ENCODE measurements at regions of chr11 and their contacts with region 1.

Region 1: GRCh38 chr11:86047275-86047991 is 21.5 kb downstream of the PICALM start:
- DNase-seq: no peak
- H3K4me3 Mint-ChIP-seq: peak overlapping the region; percentile 69
- H3K27ac Mint-ChIP-seq: peak overlapping the region; percentile 91
- H3K4me1 Mint-ChIP-seq: peaks cover 88% of the 10 kb centered on the region
- H3K27me3 Mint-ChIP-seq: no peaks in the 10 kb centered on the region

Region 2: GRCh38 chr11:85988780-85989179 is 58.7 kb before region 1 on chr11:
- intact Hi-C with region 1: no loop called
- DNase-seq: no peak
- H3K4me3 Mint-ChIP-seq: no peak overlapping the region
- H3K27ac Mint-ChIP-seq: peak overlapping the region; percentile 48
- H3K4me1 Mint-ChIP-seq: peaks cover 37% of the 10 kb centered on the region
- H3K27me3 Mint-ChIP-seq: no peaks in the 10 kb centered on the region

Region 3: DNA sequence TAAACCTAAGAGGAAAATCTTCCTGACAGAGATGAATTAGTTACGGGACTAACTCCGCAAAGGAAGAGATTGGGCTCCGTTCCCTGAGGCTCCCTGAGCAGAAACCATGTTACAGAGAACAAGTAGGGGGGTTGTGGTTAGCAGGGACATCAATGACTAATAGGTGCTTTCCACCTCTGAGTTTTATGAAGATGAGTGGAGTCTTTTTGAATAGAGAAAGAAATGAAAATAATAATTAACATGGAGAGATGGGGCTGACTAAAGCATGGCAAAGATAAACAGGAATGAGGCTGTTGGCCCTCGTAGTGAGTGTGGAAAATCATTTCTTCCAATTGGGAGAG is 68.9 kb after region 1 on chr11:
- intact Hi-C with region 1: loop called (anchors 5 kb)
- DNase-seq: no peak
- H3K4me3 Mint-ChIP-seq: peak overlapping the region; percentile 9
- H3K27ac Mint-ChIP-seq: peak overlapping the region; percentile 70
- H3K4me1 Mint-ChIP-seq: peaks cover 30% of the 10 kb centered on the region
- H3K27me3 Mint-ChIP-seq: no peaks in the 10 kb centered on the region

Region 4: DNA sequence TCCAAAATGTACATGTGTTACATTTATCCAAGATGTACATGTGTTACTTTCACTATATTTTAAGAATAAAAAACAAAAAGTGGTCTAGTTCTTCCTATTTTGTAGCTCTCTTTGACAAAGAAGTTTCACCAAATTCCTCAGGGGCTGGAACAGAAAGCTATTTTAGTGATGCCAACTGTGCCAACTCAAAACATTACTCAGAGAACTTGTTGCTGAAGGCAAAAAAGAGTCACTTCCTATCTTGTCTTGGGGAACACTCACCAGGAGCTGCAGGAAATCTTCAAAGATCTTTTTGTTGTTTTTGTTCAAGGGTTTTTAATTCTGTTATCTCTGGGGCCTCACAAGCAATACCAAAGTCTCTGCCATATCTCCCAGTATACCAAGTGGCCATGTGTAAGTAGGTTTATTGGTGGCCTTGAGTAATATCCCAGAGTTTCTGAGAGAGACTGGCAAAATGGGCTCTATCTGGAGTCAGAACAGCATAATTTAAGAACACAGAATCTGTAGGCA is 183.5 kb after region 1 on chr11:
- intact Hi-C with region 1: loop called (anchors 1 kb)
- DNase-seq: no peak
- H3K4me3 Mint-ChIP-seq: no peak overlapping the region
- H3K27ac Mint-ChIP-seq: peak overlapping the region; percentile 47
- H3K4me1 Mint-ChIP-seq: peaks cover 68% of the 10 kb centered on the region
- H3K27me3 Mint-ChIP-seq: no peaks in the 10 kb centered on the region

Region 5: DNA sequence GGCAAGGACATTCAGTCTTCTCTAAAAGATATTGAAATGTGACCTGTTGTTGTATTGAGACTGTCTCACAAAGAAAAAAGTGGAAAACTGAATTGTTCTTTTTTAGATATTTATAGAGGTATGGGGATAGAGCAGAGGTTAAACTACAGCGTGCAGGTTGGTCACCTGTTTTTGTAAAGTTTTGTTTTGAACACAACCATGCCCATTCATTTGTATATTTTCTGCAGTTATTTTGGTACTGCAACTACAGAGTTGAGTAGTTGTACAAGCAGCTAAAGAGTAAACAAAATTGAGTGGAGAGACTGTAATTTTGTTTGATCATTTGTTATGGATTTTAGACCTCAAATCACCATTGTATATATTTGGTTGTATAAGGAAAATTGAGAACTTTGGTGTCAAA is 208.5 kb after region 1 on chr11:
- intact Hi-C with region 1: loop called (anchors 1 kb)
- DNase-seq: no peak
- H3K4me3 Mint-ChIP-seq: peak overlapping the region; percentile 15
- H3K27ac Mint-ChIP-seq: peak overlapping the region; percentile 75
- H3K4me1 Mint-ChIP-seq: peaks cover 50% of the 10 kb centered on the region
- H3K27me3 Mint-ChIP-seq: no peaks in the 10 kb centered on the region

Region 6: GRCh38 chr11:87463486-87464102 is 1416.2 kb after region 1 on chr11:
- intact Hi-C with region 1: no loop called
- DNase-seq: no peak
- H3K4me3 Mint-ChIP-seq: no peak overlapping the region
- H3K27ac Mint-ChIP-seq: no peak overlapping the region
- H3K4me1 Mint-ChIP-seq: no peaks in the 10 kb centered on the region
- H3K27me3 Mint-ChIP-seq: no peaks in the 10 kb centered on the region

Measured in activated T-helper 1 cell treated with anti-CD3 and anti-CD28 coated beads, Interleukin-12 subunit alpha, Interleukin-12 subunit beta, Interleukin-2, Interleukin-4 antibody, amounts not matched to agents 30 ng/mL and 10 ng/mL and 1 ng/mL, durations not matched to agents 14 hours and 24 hours and 36 hours (primary cell).